Pancreas (tissue), 10 donors: ENCODE measurements at regions of chr3 and their contacts with region 1.

Region 1: GRCh38 chr3:124559881-124560574 is 170.2 kb upstream of the UMPS start:
- DNase-seq: peak; percentile 50 to 77 (median 68)
- ATAC-seq: peak; percentile 79 to 91 (median 88)
- H3K4me3 ChIP-seq: no peak overlapping the region
- H3K27ac ChIP-seq: no peak overlapping the region
- H3K4me1 ChIP-seq: peaks cover 7 to 32% (median 8%) of the 10 kb centered on the region in 3 donors
- H3K27me3 ChIP-seq: no peaks in the 10 kb centered on the region
- CTCF ChIP-seq: peak; percentile 83 to 92 (median 87)

Region 2: DNA sequence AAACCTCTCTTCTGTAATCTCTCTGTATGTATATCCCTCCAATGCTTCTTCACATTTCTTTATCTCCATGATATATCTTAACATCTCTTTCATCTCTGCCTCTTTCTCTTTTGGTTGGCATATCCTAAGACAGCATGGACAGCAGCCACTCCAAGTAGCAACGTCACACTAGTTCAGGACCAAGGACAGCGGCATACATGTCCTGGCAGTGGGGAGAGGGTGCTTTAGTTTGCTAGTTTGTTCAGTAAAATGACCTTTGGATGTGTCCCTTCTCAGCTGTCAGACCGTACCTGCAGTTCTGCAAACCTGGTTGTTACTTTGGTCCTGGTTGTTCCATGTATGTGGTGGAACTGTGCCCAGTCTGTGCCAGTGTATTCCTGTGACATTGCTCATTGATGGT is 342.5 kb before region 1 on chr3:
- intact Hi-C with region 1: no loop called
- DNase-seq: peak in 4 of 6 donors; percentile 30 to 58 (median 44)
- ATAC-seq: peak; percentile 38 to 87 (median 65)
- H3K4me3 ChIP-seq: no peak overlapping the region
- H3K27ac ChIP-seq: no peak overlapping the region
- H3K4me1 ChIP-seq: no peaks in the 10 kb centered on the region
- H3K27me3 ChIP-seq: no peaks in the 10 kb centered on the region
- CTCF ChIP-seq: no peak

Region 3: DNA sequence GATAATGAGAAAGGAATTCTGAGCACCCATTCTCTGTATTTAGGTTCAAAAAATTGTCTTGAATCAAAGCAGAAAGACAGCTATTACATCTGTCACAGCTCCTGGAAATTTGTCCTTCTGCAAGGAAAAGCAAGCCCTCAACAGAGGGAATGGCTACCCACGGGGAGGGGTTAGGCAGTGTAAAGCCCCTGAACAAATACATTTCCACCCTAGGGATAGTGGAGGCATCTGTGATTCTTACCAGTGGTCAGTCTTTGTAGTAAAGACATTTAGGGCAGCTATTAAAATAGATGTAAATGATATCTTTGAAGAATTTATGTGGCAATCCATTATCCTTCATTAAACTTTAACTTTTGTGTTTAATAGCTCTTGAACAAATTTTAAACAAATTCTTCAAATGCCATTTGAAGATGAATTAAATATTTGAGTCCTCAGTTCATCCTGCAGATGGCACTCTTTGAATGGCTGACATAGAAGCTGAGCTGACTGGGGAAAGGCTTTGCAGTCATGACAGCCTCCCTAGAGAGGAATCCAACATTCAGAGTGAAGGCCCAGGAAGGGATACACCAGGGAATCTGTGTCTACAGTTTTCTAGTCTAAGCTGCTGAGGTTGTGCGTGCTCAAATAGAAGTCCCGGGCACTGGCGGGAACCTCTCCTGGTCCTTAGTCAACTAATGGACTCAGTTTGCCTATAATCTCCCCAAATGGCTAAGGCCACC is 208.4 kb before region 1 on chr3:
- intact Hi-C with region 1: loop called in 1 of 3 experiments (anchors 10 kb)
- DNase-seq: peak in 3 of 6 donors; percentile 14 to 34 (median 26)
- ATAC-seq: peak; percentile 53 to 91 (median 87)
- H3K4me3 ChIP-seq: no peak overlapping the region
- H3K27ac ChIP-seq: no peak overlapping the region
- H3K4me1 ChIP-seq: no peaks in the 10 kb centered on the region
- H3K27me3 ChIP-seq: no peaks in the 10 kb centered on the region
- CTCF ChIP-seq: peak in 2 of 4 donors; percentile 25 to 29

Region 4: GRCh38 chr3:124492811-124493210 is 67.2 kb before region 1 on chr3:
- intact Hi-C with region 1: loop called in 1 of 3 experiments (anchors 10 kb)
- DNase-seq: peak; percentile 44 to 77 (median 62)
- ATAC-seq: peak; percentile 86 to 94 (median 94)
- H3K4me3 ChIP-seq: no peak overlapping the region
- H3K27ac ChIP-seq: no peak overlapping the region
- H3K4me1 ChIP-seq: no peaks in the 10 kb centered on the region
- H3K27me3 ChIP-seq: no peaks in the 10 kb centered on the region
- CTCF ChIP-seq: peak; percentile 25 to 50 (median 42)

Region 5: DNA sequence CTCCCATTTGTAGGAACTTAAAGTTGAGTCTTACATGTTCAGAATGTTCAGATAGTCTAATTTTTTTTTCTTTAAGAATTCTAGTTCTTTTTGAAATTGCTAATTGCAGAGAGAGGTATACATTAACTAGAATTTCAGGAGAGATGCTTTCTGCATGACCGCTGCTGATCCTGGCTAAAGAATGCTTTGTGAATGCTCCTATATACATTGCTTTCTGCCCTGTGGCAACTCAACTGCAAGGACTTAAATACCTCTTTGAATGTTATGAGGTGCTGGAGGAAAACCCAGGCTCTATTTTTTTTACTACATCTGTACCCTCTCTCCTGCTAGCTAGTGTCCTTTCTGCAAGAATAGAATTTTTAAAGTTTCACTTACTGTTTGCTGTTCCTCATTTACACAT is 53.6 kb before region 1 on chr3:
- intact Hi-C with region 1: no loop called
- DNase-seq: no peak
- ATAC-seq: no peak
- H3K4me3 ChIP-seq: no peak overlapping the region
- H3K27ac ChIP-seq: no peak overlapping the region
- H3K4me1 ChIP-seq: peaks cover 0 to 6% (median 4%) of the 10 kb centered on the region in 3 donors
- H3K27me3 ChIP-seq: no peaks in the 10 kb centered on the region
- CTCF ChIP-seq: no peak

Region 6: DNA sequence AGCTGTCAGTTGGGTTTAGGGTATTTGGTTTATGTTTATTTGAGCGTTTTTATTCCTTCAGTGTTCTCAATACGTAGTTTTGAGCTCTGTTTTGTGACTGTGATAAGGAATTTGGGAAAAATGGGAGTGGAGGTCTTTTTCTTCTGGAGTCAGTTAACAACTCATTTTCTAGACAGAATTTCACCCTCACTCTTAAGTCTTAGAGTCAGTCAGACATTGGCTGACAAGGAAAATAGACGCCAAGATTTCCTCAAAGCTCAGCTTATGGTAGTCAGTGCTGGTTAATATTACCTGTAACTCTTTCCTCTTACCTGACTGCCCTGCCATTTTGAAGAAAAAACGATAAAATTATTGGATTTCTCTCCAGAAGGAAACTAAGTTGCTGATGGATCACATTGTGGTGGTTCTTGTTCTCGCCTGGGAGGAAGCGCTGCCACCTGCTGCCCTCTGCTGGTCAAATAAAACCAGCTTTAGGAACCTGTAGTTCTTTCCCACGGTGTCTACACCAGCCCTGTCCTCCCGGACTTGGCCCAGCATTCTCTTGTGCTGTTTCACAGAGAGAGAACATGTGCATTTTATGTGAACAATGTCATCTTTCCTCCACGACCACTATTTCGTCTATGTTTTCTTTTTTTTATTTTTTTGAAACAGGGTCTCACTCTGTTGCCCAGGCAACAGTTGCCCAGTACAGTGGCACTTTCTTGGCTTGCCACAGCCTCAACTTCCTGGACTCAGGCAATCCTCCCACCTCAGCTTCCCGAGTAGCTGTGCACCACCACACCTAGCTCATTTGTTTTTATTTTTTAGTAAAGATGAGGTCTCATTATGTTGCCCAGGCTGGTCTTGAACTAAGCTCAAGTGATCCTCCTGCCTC is 128.8 kb after region 1 on chr3:
- intact Hi-C with region 1: loop called (anchors 2 to 10 kb)
- DNase-seq: peak; percentile 77 to 90 (median 83)
- ATAC-seq: peak; percentile 89 to 99 (median 98)
- H3K4me3 ChIP-seq: no peak overlapping the region
- H3K27ac ChIP-seq: no peak overlapping the region
- H3K4me1 ChIP-seq: peaks cover 0 to 3% (median 0%) of the 10 kb centered on the region in 3 donors
- H3K27me3 ChIP-seq: no peaks in the 10 kb centered on the region
- CTCF ChIP-seq: peak; percentile 72 to 88 (median 81)

Region 7: GRCh38 chr3:124700880-124701684 is 141.1 kb after region 1 on chr3:
- intact Hi-C with region 1: no loop called
- DNase-seq: peak in 3 of 6 donors; percentile 19 to 47 (median 38)
- ATAC-seq: peak in 3 of 4 donors; percentile 11 to 46 (median 37)
- H3K4me3 ChIP-seq: no peak overlapping the region
- H3K27ac ChIP-seq: peak overlapping the region in 2 of 4 donors; percentile 72 to 76
- H3K4me1 ChIP-seq: peaks cover 8 to 24% (median 19%) of the 10 kb centered on the region in 3 donors
- H3K27me3 ChIP-seq: no peaks in the 10 kb centered on the region
- CTCF ChIP-seq: no peak

Region 8: DNA sequence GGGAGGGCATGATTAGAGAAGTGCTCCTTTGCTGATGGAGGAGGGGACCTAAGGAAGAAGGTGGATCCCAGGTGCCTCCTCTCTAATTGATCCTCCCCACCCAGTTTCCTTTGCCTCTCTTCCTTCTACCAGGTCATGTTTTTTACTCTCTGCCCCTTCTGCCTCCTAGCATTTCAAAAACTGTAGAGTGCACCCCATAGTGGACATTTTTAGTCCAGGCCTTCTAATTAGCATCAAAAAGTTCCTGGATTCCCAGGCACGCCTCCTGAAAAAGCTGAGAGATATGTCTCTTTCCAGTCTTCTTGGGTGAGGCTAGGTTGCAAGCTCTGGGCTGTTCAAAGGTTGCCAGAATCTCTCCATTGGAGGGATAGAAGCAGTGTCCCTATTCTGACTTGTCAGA is 345.8 kb after region 1 on chr3:
- intact Hi-C with region 1: loop called in 1 of 3 experiments (anchors 10 kb)
- DNase-seq: no peak
- ATAC-seq: no peak
- H3K4me3 ChIP-seq: no peak overlapping the region
- H3K27ac ChIP-seq: no peak overlapping the region
- H3K4me1 ChIP-seq: no peaks in the 10 kb centered on the region
- H3K27me3 ChIP-seq: peaks cover 0 to 7% (median 0%) of the 10 kb centered on the region in 4 donors
- CTCF ChIP-seq: no peak

Region 9: GRCh38 chr3:124962403-124962940 is 402.4 kb after region 1 on chr3:
- intact Hi-C with region 1: no loop called
- DNase-seq: no peak
- ATAC-seq: no peak
- H3K4me3 ChIP-seq: no peak overlapping the region
- H3K27ac ChIP-seq: no peak overlapping the region
- H3K4me1 ChIP-seq: peaks cover 0 to 2% (median 0%) of the 10 kb centered on the region in 3 donors
- H3K27me3 ChIP-seq: no peaks in the 10 kb centered on the region
- CTCF ChIP-seq: no peak